ENCODE measurements at regions of chr19 and their contacts with region 1.

Region 1: GRCh38 chr19:7088999-7089398 is 19.5 kb downstream of the ZNF557 start:
- DNase-seq: no peak
- H3K4me3 ChIP-seq: no peak overlapping the region
- H3K27ac ChIP-seq: no peak overlapping the region
- H3K4me1 ChIP-seq: no peaks in the 10 kb centered on the region
- H3K27me3 ChIP-seq: no peaks in the 10 kb centered on the region
- CTCF ChIP-seq: no peak
- POLR2A ChIP-seq: no peak

Region 2: GRCh38 chr19:5577785-5578493 is 1511.1 kb before region 1 on chr19:
- intact Hi-C with region 1: no loop called
- DNase-seq: peak; percentile 36 to 78
- H3K4me3 ChIP-seq: peak overlapping the region in 2 of 3 donors; percentile 29 to 50
- H3K27ac ChIP-seq: peak overlapping the region; percentile 4 to 42
- H3K4me1 ChIP-seq: no peaks in the 10 kb centered on the region
- H3K27me3 ChIP-seq: no peaks in the 10 kb centered on the region
- CTCF ChIP-seq: peak; percentile 91 to 96 (median 93)
- POLR2A ChIP-seq: no peak

Region 3: DNA sequence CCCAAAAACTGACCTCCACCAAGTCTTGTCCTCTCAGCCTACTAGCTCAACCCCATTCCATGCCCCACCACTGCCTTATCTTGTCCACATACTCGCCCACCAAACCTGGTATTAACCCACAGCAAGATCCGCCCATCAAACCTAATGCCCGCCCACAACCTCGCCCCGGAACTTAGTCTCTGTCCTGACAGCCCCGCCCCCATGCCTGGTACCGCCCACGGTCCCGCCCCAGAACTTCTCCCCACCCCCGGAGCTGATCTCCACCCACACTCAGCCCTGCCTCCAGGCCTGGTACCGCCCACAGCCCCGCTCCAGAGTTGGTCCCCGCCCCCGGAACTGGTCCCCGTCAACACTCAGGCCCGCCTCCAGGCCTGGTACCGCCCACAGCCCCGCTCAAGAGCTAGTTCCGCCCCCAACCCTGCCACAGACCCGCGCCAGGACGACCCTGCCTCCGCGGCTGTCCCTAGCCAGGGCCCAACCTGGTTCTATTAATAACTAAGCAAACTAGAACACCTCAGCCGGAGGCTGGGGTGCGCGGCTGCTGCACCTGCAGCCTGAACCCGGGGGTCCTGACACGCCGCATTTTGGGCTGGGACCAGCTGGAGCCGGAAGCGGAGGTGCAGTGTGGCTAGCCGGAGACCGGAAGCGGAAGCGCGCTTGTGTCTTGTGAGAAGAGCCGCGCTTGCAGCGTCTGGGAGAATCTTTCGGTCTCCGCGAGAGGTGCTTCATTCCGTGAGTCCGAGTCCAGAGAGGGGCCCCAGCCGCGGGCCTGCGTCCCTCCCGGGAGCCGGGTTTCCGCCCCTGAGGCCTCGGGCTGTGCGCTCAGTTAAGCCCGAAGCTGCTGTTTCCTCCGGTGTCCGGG is 19.7 kb before region 1 on chr19 and contains the start of gene ZNF557:
- intact Hi-C with region 1: no loop called
- DNase-seq: peak; percentile 97 to 99
- H3K4me3 ChIP-seq: peak within 1 kb of the TSS; percentile 83 to 97 (median 89)
- H3K27ac ChIP-seq: peak within 1 kb of the TSS; percentile 82 to 87
- H3K4me1 ChIP-seq: peaks cover 0 to 5% of the 10 kb centered on the region in 2 donors
- H3K27me3 ChIP-seq: no peaks in the 10 kb centered on the region
- CTCF ChIP-seq: no peak
- POLR2A ChIP-seq: peak; percentile 24
- total RNA-seq, gene ZNF557: 7.2 to 18.3 (median 12.8) TPM

Region 4: DNA sequence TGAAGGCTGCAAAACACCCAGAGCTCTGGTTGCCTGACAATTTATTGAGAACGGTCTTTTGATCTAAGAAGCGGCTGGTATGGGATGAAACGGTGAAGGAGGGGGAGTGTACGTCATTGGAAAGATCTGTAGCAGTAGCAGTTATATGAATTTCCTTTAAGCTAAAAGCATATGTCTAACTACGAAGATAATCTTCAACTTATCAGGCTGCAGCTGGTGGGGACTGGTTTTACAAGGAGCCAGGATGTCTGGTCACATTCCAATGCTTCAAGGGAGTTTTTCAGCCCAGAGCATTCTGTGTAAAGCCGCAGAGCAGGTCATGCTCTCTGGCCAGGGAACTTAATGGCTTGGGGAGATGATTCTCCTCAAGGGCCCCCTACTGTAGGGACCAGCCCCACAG is 703.3 kb after region 1 on chr19:
- intact Hi-C with region 1: loop called (anchors 5 kb)
- DNase-seq: no peak
- H3K4me3 ChIP-seq: no peak overlapping the region
- H3K27ac ChIP-seq: no peak overlapping the region
- H3K4me1 ChIP-seq: no peaks in the 10 kb centered on the region
- H3K27me3 ChIP-seq: peaks cover 5 to 33% of the 10 kb centered on the region in 2 donors
- CTCF ChIP-seq: no peak
- POLR2A ChIP-seq: no peak

Measured in breast epithelium (tissue), 4 donors.